ENCODE measurements at regions of chr14 and their contacts with region 1.

Region 1: GRCh38 chr14:61456720-61457119 is 135.3 kb downstream of the PRKCH start:
- DNase-seq: peak; percentile 86
- H3K4me3 ChIP-seq: no peak overlapping the region
- H3K27ac ChIP-seq: no peak overlapping the region
- H3K4me1 ChIP-seq: peaks cover 0 to 2% (median 0%) of the 10 kb centered on the region in 4 donors
- H3K27me3 ChIP-seq: no peaks in the 10 kb centered on the region
- CTCF ChIP-seq: peak; percentile 75 to 90 (median 85)
- EP300 ChIP-seq: no peak
- POLR2A ChIP-seq: no peak

Region 2: GRCh38 chr14:61296719-61297502 is 159.8 kb before region 1 on chr14:
- in situ Hi-C with region 1: loop called in 1 of 4 experiments (anchors 10 kb)
- intact Hi-C with region 1: no loop called
- DNase-seq: no peak
- H3K4me3 ChIP-seq: no peak overlapping the region
- H3K27ac ChIP-seq: no peak overlapping the region
- H3K4me1 ChIP-seq: peaks cover 4 to 10% (median 7%) of the 10 kb centered on the region in 4 donors
- H3K27me3 ChIP-seq: no peaks in the 10 kb centered on the region
- CTCF ChIP-seq: peak; percentile 30 to 55 (median 53)
- EP300 ChIP-seq: no peak
- POLR2A ChIP-seq: no peak

Region 3: GRCh38 chr14:61438860-61439684 is 17.6 kb before region 1 on chr14:
- in situ Hi-C with region 1: no loop called
- intact Hi-C with region 1: loop called (anchors 1 kb)
- DNase-seq: peak; percentile 36
- H3K4me3 ChIP-seq: peak overlapping the region in 1 of 4 donors; percentile 8
- H3K27ac ChIP-seq: peak overlapping the region; percentile 19 to 58 (median 30)
- H3K4me1 ChIP-seq: peaks cover 4 to 32% (median 10%) of the 10 kb centered on the region in 4 donors
- H3K27me3 ChIP-seq: no peaks in the 10 kb centered on the region
- CTCF ChIP-seq: no peak
- EP300 ChIP-seq: no peak
- POLR2A ChIP-seq: no peak

Region 4: DNA sequence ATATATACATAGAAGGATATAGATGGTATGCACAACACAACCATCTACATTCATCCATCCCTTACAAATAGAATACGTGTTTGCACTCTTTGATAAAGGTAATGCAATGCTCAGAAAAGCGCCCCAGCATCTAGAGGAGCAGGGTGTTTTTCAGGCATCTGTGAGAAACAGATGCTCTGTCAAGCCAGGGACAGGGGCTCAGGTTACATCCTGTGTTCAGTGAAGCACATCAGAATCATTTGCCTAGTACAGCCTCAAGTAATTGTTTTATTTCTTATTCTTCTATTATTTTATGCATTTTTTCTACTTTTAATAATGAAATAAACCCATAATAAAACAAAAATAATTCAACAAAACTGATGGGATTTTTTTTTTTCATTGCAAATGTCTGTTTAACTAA is 188.1 kb after region 1 on chr14:
- in situ Hi-C with region 1: no loop called
- intact Hi-C with region 1: no loop called
- DNase-seq: no peak
- H3K4me3 ChIP-seq: no peak overlapping the region
- H3K27ac ChIP-seq: no peak overlapping the region
- H3K4me1 ChIP-seq: peaks cover 0 to 21% (median 6%) of the 10 kb centered on the region in 4 donors
- H3K27me3 ChIP-seq: no peaks in the 10 kb centered on the region
- CTCF ChIP-seq: no peak
- EP300 ChIP-seq: no peak
- POLR2A ChIP-seq: no peak

Region 5: DNA sequence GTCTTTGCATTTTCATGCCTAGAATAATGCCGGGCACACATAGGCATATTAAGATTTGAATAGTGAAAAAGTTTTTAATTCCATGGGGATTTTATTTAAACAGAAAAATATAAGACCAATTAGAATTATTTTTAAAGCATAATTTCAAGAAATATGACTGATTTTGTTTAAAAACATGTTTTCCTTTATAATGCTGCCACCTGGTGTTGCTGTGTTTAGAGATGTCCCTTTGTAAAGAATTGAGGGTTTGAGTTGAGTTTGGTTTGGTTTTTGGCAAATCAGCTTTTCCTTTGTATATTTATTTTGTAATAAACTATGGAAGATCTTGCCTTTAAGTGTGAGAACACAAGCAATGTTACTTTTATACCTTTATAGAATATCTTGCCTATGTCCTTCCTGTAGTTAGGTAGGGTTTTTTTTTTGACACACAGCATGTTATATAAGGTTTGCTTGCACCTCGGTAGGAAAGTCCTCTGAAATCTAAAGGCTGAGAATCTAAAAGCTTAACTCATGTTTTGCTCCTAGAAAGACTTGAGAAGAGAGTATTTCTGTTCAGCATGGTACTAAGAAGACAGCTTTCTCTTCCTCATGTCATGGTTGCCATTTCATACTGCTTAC is 274.1 kb after region 1 on chr14:
- in situ Hi-C with region 1: loop called (anchors 10 to 25 kb)
- intact Hi-C with region 1: loop called (anchors 10 kb)
- DNase-seq: no peak
- H3K4me3 ChIP-seq: no peak overlapping the region
- H3K27ac ChIP-seq: no peak overlapping the region
- H3K4me1 ChIP-seq: peaks cover 0 to 20% (median 2%) of the 10 kb centered on the region in 4 donors
- H3K27me3 ChIP-seq: no peaks in the 10 kb centered on the region
- CTCF ChIP-seq: peak; percentile 39 to 60 (median 43)
- EP300 ChIP-seq: no peak
- POLR2A ChIP-seq: no peak

Region 6: DNA sequence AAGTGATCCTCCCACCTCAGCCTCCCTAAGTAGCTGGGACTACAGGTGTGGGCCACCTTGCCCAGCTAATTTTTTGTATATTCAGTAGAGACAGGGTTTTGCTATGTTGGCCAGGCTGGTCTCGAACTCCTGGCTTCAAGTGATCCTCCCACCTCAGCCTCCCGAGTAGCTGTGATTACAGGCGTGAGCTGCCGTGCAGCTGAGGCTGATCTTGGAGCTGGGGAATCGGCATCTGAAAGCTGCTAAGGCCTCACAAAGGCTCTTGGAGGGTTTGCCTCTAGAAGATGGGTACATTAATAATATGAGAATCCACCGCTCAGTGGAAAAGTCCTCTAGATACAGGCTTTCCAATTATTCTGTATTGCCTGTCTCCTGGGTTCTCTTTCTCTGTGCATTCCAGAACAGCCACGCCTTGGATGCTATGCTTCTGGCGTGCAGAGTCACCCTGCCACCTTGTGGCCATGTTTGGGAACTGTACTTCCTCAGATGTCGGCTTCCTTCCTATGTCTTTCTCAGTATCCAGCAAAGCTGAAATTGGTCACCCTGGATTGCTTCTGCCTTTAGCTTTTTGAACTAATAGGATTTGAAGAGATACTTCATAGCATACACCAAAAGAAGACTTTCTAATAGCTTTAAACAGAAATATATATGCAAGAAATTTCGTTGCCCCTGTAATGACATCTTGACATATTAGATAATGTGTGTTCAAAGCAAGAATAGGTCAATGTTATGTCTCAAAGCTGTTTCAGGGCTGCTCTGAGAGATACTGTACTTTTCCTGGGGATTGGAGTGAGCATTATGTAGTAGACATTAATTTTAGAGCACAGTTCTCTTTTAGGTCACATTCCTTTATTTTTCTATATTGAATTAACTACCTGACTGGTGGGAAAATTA is 380.9 kb after region 1 on chr14:
- in situ Hi-C with region 1: loop called (anchors 5 kb)
- intact Hi-C with region 1: loop called (anchors 2 kb)
- DNase-seq: peak; percentile 81
- H3K4me3 ChIP-seq: no peak overlapping the region
- H3K27ac ChIP-seq: no peak overlapping the region
- H3K4me1 ChIP-seq: no peaks in the 10 kb centered on the region
- H3K27me3 ChIP-seq: peaks cover 7% of the 10 kb centered on the region
- CTCF ChIP-seq: peak; percentile 87 to 94 (median 92)
- EP300 ChIP-seq: no peak
- POLR2A ChIP-seq: no peak

Region 7: DNA sequence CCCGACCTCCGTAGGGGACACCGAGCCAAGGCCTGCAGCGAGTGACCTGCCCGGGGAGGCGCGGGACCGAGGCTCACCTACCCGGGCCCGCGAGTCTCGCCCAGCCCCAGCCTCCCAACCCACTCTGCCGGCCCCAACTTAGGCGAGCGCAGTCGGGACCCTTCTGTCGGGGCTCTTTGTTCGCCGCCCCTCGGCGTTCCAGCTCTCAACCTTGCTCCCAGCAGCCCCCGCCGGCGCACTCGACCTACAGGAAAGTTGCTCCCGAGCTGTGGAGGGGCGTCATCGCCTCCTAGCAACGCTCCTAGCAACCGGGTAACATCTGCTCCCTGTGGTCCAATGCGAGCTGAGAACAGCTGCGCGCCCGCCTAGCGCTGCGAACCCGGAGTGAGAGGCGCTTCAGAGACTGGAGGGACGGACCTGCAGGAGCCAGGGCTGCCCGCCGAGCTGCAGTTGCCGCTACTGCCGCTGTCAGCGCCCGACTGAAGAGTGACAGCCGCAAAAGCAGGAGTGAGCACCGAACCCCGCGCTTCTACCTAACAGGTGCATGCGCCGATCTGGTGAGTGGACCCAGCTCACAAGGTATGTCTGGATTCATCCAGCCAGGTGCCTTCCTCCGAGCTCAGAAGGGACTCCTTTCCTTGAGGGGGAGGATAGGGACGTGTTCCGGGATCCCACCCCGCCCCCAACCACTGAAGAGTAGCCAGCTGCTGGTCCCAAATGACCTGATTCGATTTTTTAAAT is 660.5 kb after region 1 on chr14:
- in situ Hi-C with region 1: loop called in 2 of 4 experiments (anchors 10 to 25 kb)
- intact Hi-C with region 1: loop called (anchors 10 kb)
- DNase-seq: peak; percentile 48
- H3K4me3 ChIP-seq: peak overlapping the region in 1 of 4 donors; percentile 25
- H3K27ac ChIP-seq: no peak overlapping the region
- H3K4me1 ChIP-seq: peaks cover 0 to 10% (median 4%) of the 10 kb centered on the region in 4 donors
- H3K27me3 ChIP-seq: peaks cover 69% of the 10 kb centered on the region
- CTCF ChIP-seq: no peak
- EP300 ChIP-seq: no peak
- POLR2A ChIP-seq: no peak

Region 8: GRCh38 chr14:62126879-62127478 is 670.3 kb after region 1 on chr14:
- in situ Hi-C with region 1: loop called in 2 of 4 experiments (anchors 10 to 25 kb)
- intact Hi-C with region 1: loop called (anchors 10 kb)
- DNase-seq: no peak
- H3K4me3 ChIP-seq: no peak overlapping the region
- H3K27ac ChIP-seq: no peak overlapping the region
- H3K4me1 ChIP-seq: no peaks in the 10 kb centered on the region
- H3K27me3 ChIP-seq: peaks cover 45% of the 10 kb centered on the region
- CTCF ChIP-seq: peak; percentile 61 to 72 (median 70)
- EP300 ChIP-seq: no peak
- POLR2A ChIP-seq: no peak

Region 9: DNA sequence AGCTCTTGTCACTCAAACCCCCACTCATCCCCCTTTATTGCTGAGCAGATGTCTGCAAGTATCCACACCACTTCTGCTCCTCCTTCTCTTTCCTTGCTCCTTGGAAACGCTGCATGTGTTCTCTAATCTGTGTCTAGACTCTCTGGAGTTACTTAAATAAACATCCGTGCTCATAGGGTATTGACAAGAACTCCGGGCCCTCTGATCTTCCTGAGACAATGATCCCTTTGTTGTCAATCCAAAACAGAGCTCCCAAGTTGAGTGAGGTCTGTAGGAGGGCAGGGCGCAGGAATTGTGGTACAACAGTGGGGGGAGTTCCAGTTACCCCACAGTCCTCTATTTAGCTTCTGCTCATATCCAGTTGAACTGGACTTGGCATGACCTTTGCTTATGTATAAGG is 794.5 kb after region 1 on chr14:
- in situ Hi-C with region 1: no loop called
- intact Hi-C with region 1: no loop called
- DNase-seq: no peak
- H3K4me3 ChIP-seq: no peak overlapping the region
- H3K27ac ChIP-seq: no peak overlapping the region
- H3K4me1 ChIP-seq: no peaks in the 10 kb centered on the region
- H3K27me3 ChIP-seq: no peaks in the 10 kb centered on the region
- CTCF ChIP-seq: no peak
- EP300 ChIP-seq: no peak
- POLR2A ChIP-seq: no peak